B cell (primary cell): ENCODE measurements at regions of chr19 and their contacts with region 1.

Region 1: GRCh38 chr19:6125571-6125989 is 9.9 kb upstream of the ACSBG2 start:
- DNase-seq: peak; percentile 82
- ATAC-seq: peak; percentile 92
- H3K4me3 ChIP-seq: no peak overlapping the region
- H3K4me3 Mint-ChIP-seq: no peak overlapping the region
- H3K27ac ChIP-seq: no peak overlapping the region
- H3K27ac Mint-ChIP-seq: no peak overlapping the region
- H3K4me1 ChIP-seq: no peaks in the 10 kb centered on the region
- H3K4me1 Mint-ChIP-seq: no peaks in the 10 kb centered on the region
- H3K27me3 ChIP-seq: no peaks in the 10 kb centered on the region
- H3K27me3 Mint-ChIP-seq: peaks cover 6% of the 10 kb centered on the region
- CTCF ChIP-seq: peak; percentile 96

Region 2: DNA sequence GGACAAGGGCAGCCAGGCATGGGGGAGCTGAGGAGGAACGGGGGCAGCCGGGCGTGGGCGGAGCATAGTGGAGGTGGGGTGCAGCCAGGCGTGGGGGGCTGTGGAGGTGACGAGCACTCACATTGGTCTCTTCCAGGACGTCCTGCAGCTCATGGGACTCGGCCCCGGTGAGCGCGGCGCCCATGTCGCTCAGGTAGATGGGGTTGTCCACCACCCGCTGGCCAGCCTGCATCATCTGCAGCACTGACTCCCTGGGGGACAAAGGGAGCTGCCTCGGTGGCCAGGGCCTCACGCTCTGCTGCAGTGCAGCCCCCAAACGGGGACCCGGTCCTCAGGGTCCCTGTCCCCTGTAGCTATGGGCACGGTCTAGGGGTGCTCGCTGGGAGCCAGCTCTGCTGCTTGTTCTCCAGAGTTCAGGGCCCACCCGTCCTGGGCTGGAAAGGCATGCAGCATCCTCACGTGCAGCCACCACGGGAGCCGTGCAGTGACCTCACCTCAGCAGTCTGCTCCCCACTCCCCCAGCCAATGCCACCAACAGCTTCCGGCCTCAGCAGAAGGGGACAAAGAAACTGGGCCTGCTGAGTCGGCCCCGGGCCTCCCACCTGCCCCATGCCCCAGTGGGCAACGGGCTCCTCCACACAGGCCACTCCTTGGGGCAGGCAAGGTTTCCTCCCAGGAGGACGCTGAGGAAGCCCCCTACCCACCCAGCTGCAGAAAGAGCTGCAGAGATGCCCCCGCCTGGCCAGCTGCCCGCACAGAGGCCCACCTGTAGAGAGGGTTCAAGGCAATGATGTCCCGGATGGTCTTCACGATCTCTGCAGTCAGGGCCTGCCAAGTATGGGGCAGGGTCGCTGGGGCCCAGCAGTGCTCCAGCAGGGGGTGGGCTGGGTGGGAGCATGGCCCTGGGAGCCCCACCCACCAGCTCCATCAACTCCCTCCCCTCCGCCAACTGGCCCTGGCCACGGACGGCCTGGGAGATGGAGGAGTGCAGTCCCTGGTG is 417.7 kb before region 1 on chr19:
- CTCF ChIA-PET with region 1: no interaction called
- POLR2A ChIA-PET with region 1: no interaction called
- intact Hi-C with region 1: no loop called
- DNase-seq: peak; percentile 30
- ATAC-seq: no peak
- H3K4me3 ChIP-seq: no peak overlapping the region
- H3K4me3 Mint-ChIP-seq: no peak overlapping the region
- H3K27ac ChIP-seq: no peak overlapping the region
- H3K27ac Mint-ChIP-seq: no peak overlapping the region
- H3K4me1 ChIP-seq: no peaks in the 10 kb centered on the region
- H3K4me1 Mint-ChIP-seq: no peaks in the 10 kb centered on the region
- H3K27me3 ChIP-seq: no peaks in the 10 kb centered on the region
- H3K27me3 Mint-ChIP-seq: no peaks in the 10 kb centered on the region
- CTCF ChIP-seq: no peak

Region 3: GRCh38 chr19:6039541-6040225 is 85.9 kb before region 1 on chr19:
- CTCF ChIA-PET with region 1: interaction called, 188 read pairs
- POLR2A ChIA-PET with region 1: no interaction called
- intact Hi-C with region 1: no loop called
- DNase-seq: no peak
- ATAC-seq: peak; percentile 21
- H3K4me3 ChIP-seq: no peak overlapping the region
- H3K4me3 Mint-ChIP-seq: peak overlapping the region; percentile 30
- H3K27ac ChIP-seq: no peak overlapping the region
- H3K27ac Mint-ChIP-seq: no peak overlapping the region
- H3K4me1 ChIP-seq: peaks cover 0 to 15% of the 10 kb centered on the region in 2 donors
- H3K4me1 Mint-ChIP-seq: peaks cover 19% of the 10 kb centered on the region
- H3K27me3 ChIP-seq: no peaks in the 10 kb centered on the region
- H3K27me3 Mint-ChIP-seq: no peaks in the 10 kb centered on the region
- CTCF ChIP-seq: no peak

Region 4: DNA sequence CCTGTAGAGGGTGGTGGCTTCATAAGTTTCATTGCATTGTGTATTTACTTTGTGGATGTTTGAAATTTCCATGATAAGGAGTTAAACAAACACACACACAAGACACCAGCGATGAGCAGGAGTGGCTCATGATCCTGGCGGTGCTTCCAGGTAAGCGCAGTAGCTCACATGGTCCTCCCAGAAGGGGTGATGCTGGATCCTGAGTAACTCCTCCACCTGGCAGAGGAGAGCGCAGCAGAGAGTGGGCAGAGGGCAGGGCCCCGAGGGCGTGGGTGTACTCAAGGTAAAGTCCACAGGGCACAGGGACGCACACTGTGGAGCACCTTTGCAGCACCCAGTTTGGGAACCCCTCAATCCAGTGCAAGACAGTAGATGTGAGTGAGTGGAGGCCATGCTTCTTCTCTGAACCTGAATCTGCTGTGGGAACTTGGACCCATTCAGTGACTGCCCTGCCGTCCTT is 69.3 kb before region 1 on chr19:
- CTCF ChIA-PET with region 1: interaction called, 98 read pairs
- POLR2A ChIA-PET with region 1: no interaction called
- intact Hi-C with region 1: no loop called
- DNase-seq: no peak
- ATAC-seq: no peak
- H3K4me3 ChIP-seq: no peak overlapping the region
- H3K4me3 Mint-ChIP-seq: no peak overlapping the region
- H3K27ac ChIP-seq: no peak overlapping the region
- H3K27ac Mint-ChIP-seq: no peak overlapping the region
- H3K4me1 ChIP-seq: no peaks in the 10 kb centered on the region
- H3K4me1 Mint-ChIP-seq: no peaks in the 10 kb centered on the region
- H3K27me3 ChIP-seq: no peaks in the 10 kb centered on the region
- H3K27me3 Mint-ChIP-seq: no peaks in the 10 kb centered on the region
- CTCF ChIP-seq: no peak

Region 5: DNA sequence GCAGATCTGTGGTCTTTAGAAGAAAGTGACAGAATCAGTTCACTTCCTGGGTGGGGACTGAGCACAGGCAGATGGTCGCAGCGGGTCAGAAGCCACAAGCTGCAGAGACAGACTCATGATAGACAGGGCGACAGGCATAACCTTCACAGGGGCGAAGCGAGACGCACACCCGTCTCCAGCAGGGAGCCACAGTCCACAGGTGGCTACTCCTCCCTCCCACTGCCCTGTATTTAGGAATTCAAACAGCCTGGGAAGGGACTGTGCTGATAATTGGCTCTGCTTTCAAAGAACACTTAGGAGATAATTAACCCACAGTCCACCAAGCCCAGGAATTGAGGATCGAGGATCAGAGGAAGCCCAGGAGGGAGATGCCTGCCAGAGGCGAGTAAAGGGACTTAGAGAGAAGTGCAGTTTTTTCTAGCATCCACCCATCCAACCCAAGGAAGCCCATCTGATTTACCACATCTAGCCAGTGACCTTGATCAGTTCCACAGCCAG is 38.5 kb before region 1 on chr19:
- CTCF ChIA-PET with region 1: interaction called, 26 read pairs
- POLR2A ChIA-PET with region 1: no interaction called
- intact Hi-C with region 1: loop called (anchors 5 kb)
- DNase-seq: peak; percentile 47
- ATAC-seq: peak; percentile 58
- H3K4me3 ChIP-seq: peak overlapping the region in 3 of 5 experiments; percentile 33 to 51 (median 44)
- H3K4me3 Mint-ChIP-seq: peak overlapping the region; percentile 71
- H3K27ac ChIP-seq: peak overlapping the region; percentile 58 to 68
- H3K27ac Mint-ChIP-seq: peak overlapping the region; percentile 83
- H3K4me1 ChIP-seq: peaks cover 26 to 28% of the 10 kb centered on the region in 2 donors
- H3K4me1 Mint-ChIP-seq: peaks cover 25% of the 10 kb centered on the region
- H3K27me3 ChIP-seq: no peaks in the 10 kb centered on the region
- H3K27me3 Mint-ChIP-seq: no peaks in the 10 kb centered on the region
- CTCF ChIP-seq: no peak

Region 6: GRCh38 chr19:6164906-6165531 is 39.4 kb after region 1 on chr19:
- CTCF ChIA-PET with region 1: no interaction called
- POLR2A ChIA-PET with region 1: no interaction called
- intact Hi-C with region 1: no loop called
- DNase-seq: no peak
- ATAC-seq: no peak
- H3K4me3 ChIP-seq: no peak overlapping the region
- H3K4me3 Mint-ChIP-seq: no peak overlapping the region
- H3K27ac ChIP-seq: no peak overlapping the region
- H3K27ac Mint-ChIP-seq: no peak overlapping the region
- H3K4me1 ChIP-seq: peaks cover 6 to 10% of the 10 kb centered on the region in 2 donors
- H3K4me1 Mint-ChIP-seq: peaks cover 7% of the 10 kb centered on the region
- H3K27me3 ChIP-seq: peaks cover 0 to 5% (median 0%) of the 10 kb centered on the region in 4 experiments
- H3K27me3 Mint-ChIP-seq: no peaks in the 10 kb centered on the region
- CTCF ChIP-seq: no peak

Region 7: GRCh38 chr19:6199240-6199983 is 73.8 kb after region 1 on chr19:
- CTCF ChIA-PET with region 1: no interaction called
- POLR2A ChIA-PET with region 1: no interaction called
- intact Hi-C with region 1: no loop called
- DNase-seq: peak; percentile 100
- ATAC-seq: peak; percentile 88
- H3K4me3 ChIP-seq: peak overlapping the region; percentile 32 to 88 (median 72)
- H3K4me3 Mint-ChIP-seq: peak overlapping the region; percentile 99
- H3K27ac ChIP-seq: peak overlapping the region; percentile 56 to 60
- H3K27ac Mint-ChIP-seq: peak overlapping the region; percentile 89
- H3K4me1 ChIP-seq: peaks cover 17 to 34% of the 10 kb centered on the region in 2 donors
- H3K4me1 Mint-ChIP-seq: peaks cover 32% of the 10 kb centered on the region
- H3K27me3 ChIP-seq: no peaks in the 10 kb centered on the region
- H3K27me3 Mint-ChIP-seq: no peaks in the 10 kb centered on the region
- CTCF ChIP-seq: peak; percentile 57

Region 8: GRCh38 chr19:6218491-6219162 is 93.0 kb after region 1 on chr19:
- CTCF ChIA-PET with region 1: interaction called, 10 read pairs
- POLR2A ChIA-PET with region 1: no interaction called
- intact Hi-C with region 1: no loop called
- DNase-seq: peak; percentile 82
- ATAC-seq: peak; percentile 79
- H3K4me3 ChIP-seq: no peak overlapping the region
- H3K4me3 Mint-ChIP-seq: no peak overlapping the region
- H3K27ac ChIP-seq: no peak overlapping the region
- H3K27ac Mint-ChIP-seq: no peak overlapping the region
- H3K4me1 ChIP-seq: peaks cover 0 to 6% of the 10 kb centered on the region in 2 donors
- H3K4me1 Mint-ChIP-seq: peaks cover 3% of the 10 kb centered on the region
- H3K27me3 ChIP-seq: no peaks in the 10 kb centered on the region
- H3K27me3 Mint-ChIP-seq: no peaks in the 10 kb centered on the region
- CTCF ChIP-seq: peak; percentile 92